Naive thymus-derived CD4-positive, alpha-beta T cell (primary cell): ENCODE measurements at regions of chr17 and their contacts with region 1.

Region 1: GRCh38 chr17:68247445-68248198 is at the start of gene AMZ2:
- DNase-seq: peak; percentile 92 to 100 (median 97)
- ATAC-seq: peak; percentile 96
- H3K4me3 ChIP-seq: peak within 1 kb of the TSS; percentile 89
- H3K4me3 Mint-ChIP-seq: peak within 1 kb of the TSS; percentile 80 to 96 (median 92)
- H3K27ac ChIP-seq: peak within 1 kb of the TSS; percentile 99
- H3K27ac Mint-ChIP-seq: peak within 1 kb of the TSS; percentile 78 to 99 (median 97)
- H3K4me1 ChIP-seq: peaks cover 18 to 36% of the 10 kb centered on the region in 2 donors
- H3K4me1 Mint-ChIP-seq: peaks cover 11 to 52% (median 31%) of the 10 kb centered on the region in 7 donors
- H3K27me3 ChIP-seq: no peaks in the 10 kb centered on the region
- H3K27me3 Mint-ChIP-seq: no peaks in the 10 kb centered on the region
- total RNA-seq, gene AMZ2: 47.6 to 85.5 (median 73.8) TPM

Region 2: GRCh38 chr17:68048996-68049395 is 198.6 kb before region 1 on chr17:
- CTCF ChIA-PET with region 1: no interaction called
- POLR2A ChIA-PET with region 1: no interaction called
- intact Hi-C with region 1: no loop called
- DNase-seq: no peak
- ATAC-seq: no peak
- H3K4me3 ChIP-seq: no peak overlapping the region
- H3K4me3 Mint-ChIP-seq: no peak overlapping the region
- H3K27ac ChIP-seq: no peak overlapping the region
- H3K27ac Mint-ChIP-seq: peak overlapping the region in 1 of 9 donors; percentile 32
- H3K4me1 ChIP-seq: no peaks in the 10 kb centered on the region
- H3K4me1 Mint-ChIP-seq: peaks cover 0 to 5% (median under 1%) of the 10 kb centered on the region in 7 donors
- H3K27me3 ChIP-seq: no peaks in the 10 kb centered on the region
- H3K27me3 Mint-ChIP-seq: no peaks in the 10 kb centered on the region

Region 3: GRCh38 chr17:68179926-68180285 is 67.7 kb before region 1 on chr17:
- CTCF ChIA-PET with region 1: interaction called, 3 read pairs
- POLR2A ChIA-PET with region 1: interaction called, 23 read pairs
- intact Hi-C with region 1: loop called (anchors 2 kb)
- DNase-seq: no peak
- ATAC-seq: no peak
- H3K4me3 ChIP-seq: no peak overlapping the region
- H3K4me3 Mint-ChIP-seq: no peak overlapping the region
- H3K27ac ChIP-seq: no peak overlapping the region
- H3K27ac Mint-ChIP-seq: peak overlapping the region in 2 of 9 donors; percentile 87 to 90
- H3K4me1 ChIP-seq: peaks cover 18 to 37% of the 10 kb centered on the region in 2 donors
- H3K4me1 Mint-ChIP-seq: peaks cover 17 to 58% (median 49%) of the 10 kb centered on the region in 7 donors
- H3K27me3 ChIP-seq: no peaks in the 10 kb centered on the region
- H3K27me3 Mint-ChIP-seq: no peaks in the 10 kb centered on the region

Region 4: DNA sequence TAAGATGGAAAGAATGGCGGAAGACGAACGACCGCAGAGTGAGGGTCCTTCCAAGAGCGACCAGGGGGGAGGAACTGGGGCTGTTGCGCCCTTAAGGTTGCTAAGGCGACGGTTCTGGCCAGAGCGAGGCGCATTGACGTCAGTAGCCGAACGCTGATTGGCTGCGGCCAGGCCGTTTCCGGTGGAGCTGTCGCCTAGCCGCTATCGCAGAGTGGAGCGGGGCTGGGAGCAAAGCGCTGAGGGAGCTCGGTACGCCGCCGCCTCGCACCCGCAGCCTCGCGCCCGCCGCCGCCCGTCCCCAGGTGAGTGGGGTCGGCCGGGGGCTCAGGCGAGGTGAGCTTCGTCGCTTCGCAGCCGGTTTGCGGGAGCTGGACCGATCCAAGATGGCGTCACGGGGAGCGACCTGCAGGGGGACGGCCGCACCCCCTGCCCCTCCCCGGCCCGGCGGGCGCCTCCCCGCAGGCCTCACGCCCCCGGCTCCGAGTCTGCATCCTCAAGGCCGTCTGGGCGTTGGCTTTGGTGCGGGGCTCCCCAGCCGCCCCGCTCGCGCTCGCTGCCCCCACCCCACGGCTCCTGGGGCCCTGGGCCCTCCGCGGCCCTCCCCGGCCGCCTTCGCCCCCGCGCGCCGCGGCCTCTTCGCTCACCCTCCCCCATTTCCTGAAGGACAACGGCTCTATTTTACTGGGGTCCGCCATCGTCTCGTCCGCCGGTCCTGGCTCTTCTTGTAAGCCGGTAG is 264.8 kb after region 1 on chr17 and contains the start of gene PRKAR1A:
- CTCF ChIA-PET with region 1: no interaction called
- POLR2A ChIA-PET with region 1: no interaction called
- intact Hi-C with region 1: loop called in 1 of 2 experiments (anchors 2 kb)
- DNase-seq: peak; percentile 84 to 96 (median 94)
- ATAC-seq: peak; percentile 92
- H3K4me3 ChIP-seq: peak within 1 kb of the TSS; percentile 97
- H3K4me3 Mint-ChIP-seq: peak within 1 kb of the TSS; percentile 89 to 100 (median 100)
- H3K27ac ChIP-seq: peak within 1 kb of the TSS; percentile 98
- H3K27ac Mint-ChIP-seq: peak within 1 kb of the TSS; percentile 91 to 100 (median 100)
- H3K4me1 ChIP-seq: peaks cover 13 to 22% of the 10 kb centered on the region in 2 donors
- H3K4me1 Mint-ChIP-seq: peaks cover 34 to 74% (median 51%) of the 10 kb centered on the region in 7 donors
- H3K27me3 ChIP-seq: no peaks in the 10 kb centered on the region
- H3K27me3 Mint-ChIP-seq: no peaks in the 10 kb centered on the region
- total RNA-seq, gene PRKAR1A: 115 to 224 (median 156) TPM

Region 5: DNA sequence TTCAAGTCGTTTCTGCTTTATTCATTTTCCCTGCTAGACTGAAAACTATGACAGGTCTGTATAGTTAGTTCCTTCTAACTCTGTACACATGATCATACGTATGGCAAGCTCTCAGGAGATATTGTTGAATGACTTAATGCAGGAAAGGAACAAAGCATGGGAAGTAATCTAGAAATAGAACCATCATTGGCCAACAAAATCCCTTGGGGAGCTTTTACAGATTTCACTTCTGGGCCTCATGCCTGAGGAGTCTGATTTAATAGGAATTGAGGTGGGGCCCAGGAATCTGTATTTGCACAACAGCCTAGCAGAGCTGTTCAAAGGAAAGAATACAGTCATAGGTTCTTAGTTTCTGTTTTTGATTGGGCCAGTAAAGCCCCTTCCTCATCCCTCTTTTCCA is 1396.1 kb after region 1 on chr17:
- CTCF ChIA-PET with region 1: no interaction called
- POLR2A ChIA-PET with region 1: no interaction called
- intact Hi-C with region 1: no loop called
- DNase-seq: no peak
- ATAC-seq: no peak
- H3K4me3 ChIP-seq: no peak overlapping the region
- H3K4me3 Mint-ChIP-seq: no peak overlapping the region
- H3K27ac ChIP-seq: no peak overlapping the region
- H3K27ac Mint-ChIP-seq: no peak overlapping the region
- H3K4me1 ChIP-seq: no peaks in the 10 kb centered on the region
- H3K4me1 Mint-ChIP-seq: no peaks in the 10 kb centered on the region
- H3K27me3 ChIP-seq: no peaks in the 10 kb centered on the region
- H3K27me3 Mint-ChIP-seq: peaks cover 0 to 9% (median 0%) of the 10 kb centered on the region in 5 donors